ENCODE measurements at regions of chr7 and their contacts with region 1.

Region 1: DNA sequence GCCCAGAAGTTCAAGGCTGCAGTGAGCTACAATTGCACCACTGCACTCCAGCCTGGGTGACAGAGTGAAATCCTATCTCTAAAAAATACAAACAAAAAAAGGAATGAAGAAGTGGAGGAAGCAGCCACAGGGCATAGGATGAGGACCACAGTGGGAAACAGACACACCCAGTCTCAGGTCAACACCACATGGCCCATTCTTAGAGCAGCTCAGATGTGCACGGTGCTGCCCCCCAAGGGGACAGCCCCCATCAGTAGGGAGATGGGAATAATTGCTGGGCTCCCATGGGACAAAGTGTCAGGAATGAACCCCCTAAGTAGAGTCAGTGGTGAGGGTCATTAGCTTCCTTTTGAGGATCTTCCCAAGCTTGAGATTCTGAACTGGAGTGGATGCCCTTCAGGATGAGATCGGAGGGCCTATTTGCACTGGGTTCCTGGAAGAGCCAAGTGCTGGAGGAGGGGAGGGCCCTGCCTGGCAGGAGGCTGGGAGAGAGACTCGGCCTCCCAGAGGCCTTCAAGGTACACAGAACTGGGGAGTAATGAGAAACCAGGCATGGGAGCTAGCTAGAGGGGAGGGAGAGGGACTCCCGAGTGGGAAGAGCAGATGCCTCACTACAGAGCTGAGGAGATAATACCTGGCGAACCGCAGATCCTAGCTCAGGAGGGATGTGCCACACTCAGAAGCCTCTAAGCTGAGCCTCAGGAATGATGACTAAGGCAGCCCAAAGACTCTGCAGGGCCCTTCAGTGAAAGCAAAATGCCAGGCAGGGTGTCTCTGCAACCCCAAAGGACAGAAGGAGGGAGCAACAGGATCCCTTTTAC is 9.6 kb downstream of the PDAP1 start:
- DNase-seq: no peak
- ATAC-seq: no peak
- H3K4me3 Mint-ChIP-seq: no peak overlapping the region
- H3K27ac Mint-ChIP-seq: peak overlapping the region; percentile 6
- H3K4me1 Mint-ChIP-seq: peaks cover 11% of the 10 kb centered on the region
- H3K27me3 Mint-ChIP-seq: no peaks in the 10 kb centered on the region
- CTCF ChIP-seq: no peak

Region 2: DNA sequence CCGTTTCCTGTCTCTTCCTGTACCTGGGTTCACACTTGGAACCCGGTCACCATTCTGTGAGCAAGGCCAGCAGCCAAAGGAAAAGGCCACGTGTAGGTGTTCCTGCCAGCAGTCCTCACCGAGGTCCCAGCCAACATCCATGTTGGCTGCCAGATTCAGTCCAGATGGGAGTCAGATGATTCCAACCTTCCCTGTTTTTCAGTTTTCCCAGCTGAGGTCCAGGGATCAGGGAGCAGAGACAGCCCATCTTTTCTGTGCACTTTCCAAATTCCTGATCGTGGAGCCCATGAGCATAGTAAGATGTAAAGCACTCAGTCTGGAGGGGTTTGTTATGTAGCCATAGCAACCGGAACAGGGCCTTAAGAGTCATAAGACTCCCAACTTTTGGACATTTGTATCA is 817.1 kb after region 1 on chr7:
- CTCF ChIA-PET with region 1: no interaction called
- POLR2A ChIA-PET with region 1: interaction called, 12 read pairs
- intact Hi-C with region 1: no loop called
- DNase-seq: no peak
- ATAC-seq: no peak
- H3K4me3 Mint-ChIP-seq: no peak overlapping the region
- H3K27ac Mint-ChIP-seq: peak overlapping the region; percentile 81
- H3K4me1 Mint-ChIP-seq: peaks cover 89% of the 10 kb centered on the region
- H3K27me3 Mint-ChIP-seq: no peaks in the 10 kb centered on the region
- CTCF ChIP-seq: no peak